ENCODE measurements at regions of chr6 and their contacts with region 1.

Region 1: GRCh38 chr6:79064635-79065034 is 13.4 kb downstream of the PHIP start:
- DNase-seq: no peak
- ATAC-seq: no peak
- H3K4me3 ChIP-seq: no peak overlapping the region
- H3K27ac ChIP-seq: no peak overlapping the region
- H3K4me1 ChIP-seq: peaks cover 0 to 49% (median 25%) of the 10 kb centered on the region in 12 donors
- H3K27me3 ChIP-seq: no peaks in the 10 kb centered on the region
- CTCF ChIP-seq: no peak
- POLR2A ChIP-seq: no peak

Region 2: GRCh38 chr6:79048611-79049010 is 16.0 kb before region 1 on chr6:
- intact Hi-C with region 1: loop called in 1 of 10 experiments (anchors 2 kb)
- DNase-seq: no peak
- ATAC-seq: no peak
- H3K4me3 ChIP-seq: no peak overlapping the region
- H3K27ac ChIP-seq: no peak overlapping the region
- H3K4me1 ChIP-seq: peaks cover 0 to 2% (median 0%) of the 10 kb centered on the region in 12 donors
- H3K27me3 ChIP-seq: no peaks in the 10 kb centered on the region
- CTCF ChIP-seq: peak in 6 of 12 donors; percentile 11 to 40 (median 24)
- POLR2A ChIP-seq: no peak

Region 3: GRCh38 chr6:79084693-79085092 is 20.1 kb after region 1 on chr6:
- intact Hi-C with region 1: no loop called
- DNase-seq: no peak
- ATAC-seq: no peak
- H3K4me3 ChIP-seq: no peak overlapping the region
- H3K27ac ChIP-seq: no peak overlapping the region
- H3K4me1 ChIP-seq: peaks cover 0 to 14% (median 2%) of the 10 kb centered on the region in 12 donors
- H3K27me3 ChIP-seq: no peaks in the 10 kb centered on the region
- CTCF ChIP-seq: no peak
- POLR2A ChIP-seq: no peak

Measured in heart left ventricle (tissue), 16 donors.